Activated CD4-positive, alpha-beta T cell treated with anti-CD3 and anti-CD28 coated beads for 36 hours (primary cell): ENCODE measurements at regions of chr14 and their contacts with region 1.

Region 1: GRCh38 chr14:96852823-96853422 is 55.7 kb downstream of the VRK1 start:
- DNase-seq: no peak
- ATAC-seq: peak; percentile 38
- H3K4me3 Mint-ChIP-seq: no peak overlapping the region
- H3K27ac Mint-ChIP-seq: no peak overlapping the region
- H3K4me1 Mint-ChIP-seq: peaks cover 22% of the 10 kb centered on the region
- H3K27me3 Mint-ChIP-seq: no peaks in the 10 kb centered on the region

Region 2: GRCh38 chr14:95463171-95463901 is 1389.6 kb before region 1 on chr14:
- CTCF ChIA-PET with region 1: no interaction called
- POLR2A ChIA-PET with region 1: no interaction called
- intact Hi-C with region 1: no loop called
- DNase-seq: peak; percentile 44
- ATAC-seq: peak; percentile 65
- H3K4me3 Mint-ChIP-seq: no peak overlapping the region
- H3K27ac Mint-ChIP-seq: peak overlapping the region; percentile 72
- H3K4me1 Mint-ChIP-seq: peaks cover 76% of the 10 kb centered on the region
- H3K27me3 Mint-ChIP-seq: no peaks in the 10 kb centered on the region

Region 3: DNA sequence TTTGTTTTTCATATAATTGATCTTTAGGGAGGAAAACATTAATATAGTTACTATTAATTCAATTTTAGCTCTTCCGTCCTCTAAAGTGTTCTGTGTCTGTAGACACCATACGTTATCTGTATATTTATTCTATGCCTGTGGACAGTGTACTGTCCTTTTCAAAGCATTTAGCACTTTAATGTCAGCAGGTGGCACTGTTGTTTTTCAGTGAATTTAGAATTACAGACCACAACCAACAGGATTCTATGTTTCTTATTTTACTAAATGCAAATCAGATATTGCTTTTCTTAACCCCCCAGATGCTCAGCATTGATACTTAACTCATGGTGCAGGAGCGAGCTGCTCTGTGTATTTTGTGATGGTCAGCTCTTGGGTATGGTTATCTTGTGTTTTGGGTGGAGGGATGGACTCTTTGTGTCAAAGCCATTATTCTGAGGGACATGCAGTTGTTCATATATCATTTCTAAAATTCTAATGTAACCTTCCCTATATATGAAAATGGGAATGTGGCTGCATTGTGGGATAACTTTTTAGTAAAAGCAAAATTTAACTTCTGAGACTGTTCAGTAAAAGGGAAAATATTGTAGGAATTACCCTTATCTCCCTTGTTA is 285.5 kb before region 1 on chr14:
- CTCF ChIA-PET with region 1: interaction called, 3 read pairs
- POLR2A ChIA-PET with region 1: no interaction called
- intact Hi-C with region 1: loop called in 1 of 2 experiments (anchors 10 kb)
- DNase-seq: no peak
- ATAC-seq: peak; percentile 58
- H3K4me3 Mint-ChIP-seq: no peak overlapping the region
- H3K27ac Mint-ChIP-seq: no peak overlapping the region
- H3K4me1 Mint-ChIP-seq: no peaks in the 10 kb centered on the region
- H3K27me3 Mint-ChIP-seq: no peaks in the 10 kb centered on the region

Region 4: GRCh38 chr14:96735526-96735925 is 117.4 kb before region 1 on chr14:
- CTCF ChIA-PET with region 1: no interaction called
- POLR2A ChIA-PET with region 1: no interaction called
- intact Hi-C with region 1: no loop called
- DNase-seq: no peak
- ATAC-seq: no peak
- H3K4me3 Mint-ChIP-seq: no peak overlapping the region
- H3K27ac Mint-ChIP-seq: no peak overlapping the region
- H3K4me1 Mint-ChIP-seq: no peaks in the 10 kb centered on the region
- H3K27me3 Mint-ChIP-seq: peaks cover 46% of the 10 kb centered on the region

Region 5: DNA sequence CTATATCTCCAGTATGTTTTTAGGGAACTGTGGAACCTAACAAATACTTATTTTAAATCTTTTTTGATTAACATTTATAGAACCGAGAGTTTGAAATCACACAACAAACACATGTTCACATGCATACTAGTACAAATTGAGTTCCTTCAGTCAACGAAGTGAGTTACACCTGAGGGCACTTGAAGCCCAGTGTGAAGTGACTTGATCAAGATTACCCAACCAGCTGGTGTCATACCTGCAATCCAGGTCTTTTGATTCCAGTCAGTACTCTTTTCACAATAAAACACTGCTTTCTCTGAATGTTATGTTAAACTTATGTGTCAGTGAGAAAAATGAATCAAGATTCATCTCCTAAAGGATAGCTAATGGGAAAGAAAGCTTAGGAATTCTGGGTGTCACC is 20.6 kb before region 1 on chr14:
- CTCF ChIA-PET with region 1: interaction called, 20 read pairs
- POLR2A ChIA-PET with region 1: no interaction called
- intact Hi-C with region 1: no loop called
- DNase-seq: no peak
- ATAC-seq: no peak
- H3K4me3 Mint-ChIP-seq: no peak overlapping the region
- H3K27ac Mint-ChIP-seq: no peak overlapping the region
- H3K4me1 Mint-ChIP-seq: peaks cover 8% of the 10 kb centered on the region
- H3K27me3 Mint-ChIP-seq: no peaks in the 10 kb centered on the region